ENCODE measurements at regions of chr6 and their contacts with region 1.

Region 1: GRCh38 chr6:138931660-138932059 is 56.4 kb downstream of the REPS1 start:
- DNase-seq: no peak
- ATAC-seq: no peak
- H3K4me3 ChIP-seq: no peak overlapping the region
- H3K27ac ChIP-seq: no peak overlapping the region
- H3K4me1 ChIP-seq: no peaks in the 10 kb centered on the region
- H3K27me3 ChIP-seq: no peaks in the 10 kb centered on the region
- CTCF ChIP-seq: no peak
- POLR2A ChIP-seq: no peak
- RAD21 ChIP-seq: no peak

Region 2: GRCh38 chr6:138953451-138953850 is 21.8 kb after region 1 on chr6:
- CTCF ChIA-PET with region 1: no interaction called
- POLR2A ChIA-PET with region 1: no interaction called
- dilution Hi-C with region 1: no loop called
- in situ Hi-C with region 1: no loop called
- intact Hi-C with region 1: loop called (anchors 1 kb)
- DNase-seq: peak; percentile 22
- ATAC-seq: no peak
- H3K4me3 ChIP-seq: no peak overlapping the region
- H3K27ac ChIP-seq: no peak overlapping the region
- H3K4me1 ChIP-seq: no peaks in the 10 kb centered on the region; the same call in none of the 2 replicates
- H3K27me3 ChIP-seq: no peaks in the 10 kb centered on the region
- CTCF ChIP-seq: no peak
- POLR2A ChIP-seq: no peak
- RAD21 ChIP-seq: no peak